Calu3 (cell line): ENCODE measurements at regions of chr2 and their contacts with region 1.

Region 1: DNA sequence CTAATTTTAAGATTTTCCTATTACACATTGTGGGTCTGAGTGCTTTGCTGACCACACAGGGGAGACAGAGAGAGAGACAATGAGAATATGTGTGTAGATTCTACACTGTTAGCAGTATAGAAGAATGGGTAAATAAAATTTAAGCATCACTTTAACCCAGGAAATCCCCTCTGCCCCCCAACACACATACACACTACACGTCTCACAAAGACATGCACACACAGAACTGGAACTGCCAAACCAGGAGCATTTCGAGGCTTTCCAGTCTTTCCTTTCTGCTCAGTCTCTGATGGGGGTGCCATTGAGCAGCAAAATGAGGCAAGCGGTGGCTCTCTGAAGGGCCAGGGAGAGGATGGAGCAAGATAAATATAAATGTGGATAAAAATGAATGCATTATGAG is 2.5 kb downstream of the MERTK start:
- DNase-seq: peak; percentile 60
- H3K4me3 Mint-ChIP-seq: no peak overlapping the region
- H3K27ac Mint-ChIP-seq: no peak overlapping the region
- H3K4me1 Mint-ChIP-seq: peaks cover 22% of the 10 kb centered on the region
- H3K27me3 Mint-ChIP-seq: no peaks in the 10 kb centered on the region
- CTCF ChIP-seq: peak; percentile 31

Region 2: DNA sequence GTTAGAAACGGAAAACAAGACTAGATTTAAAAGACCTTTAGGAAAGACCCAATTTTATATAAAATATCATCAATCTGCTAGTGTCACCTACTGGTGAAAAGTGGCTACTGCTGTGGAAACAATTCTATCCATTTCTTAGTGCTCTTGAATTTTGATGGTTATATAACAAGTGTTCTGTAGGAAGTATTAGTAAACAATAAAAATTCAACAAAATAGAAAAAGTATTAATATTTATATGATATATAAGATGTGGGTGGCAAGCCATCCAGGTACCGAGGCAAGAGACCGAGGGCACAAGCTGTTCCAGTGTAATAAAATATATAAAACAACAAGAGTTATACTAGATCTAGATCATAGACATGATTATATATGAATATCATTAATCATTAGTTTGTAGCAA is 148.0 kb after region 1 on chr2:
- CTCF ChIA-PET with region 1: interaction called, 5 read pairs
- intact Hi-C with region 1: loop called (anchors 1 kb)
- DNase-seq: peak; percentile 44
- H3K4me3 Mint-ChIP-seq: no peak overlapping the region
- H3K27ac Mint-ChIP-seq: no peak overlapping the region
- H3K4me1 Mint-ChIP-seq: peaks cover 17% of the 10 kb centered on the region
- H3K27me3 Mint-ChIP-seq: peaks cover 5% of the 10 kb centered on the region
- CTCF ChIP-seq: peak; percentile 33